ENCODE measurements at regions of chr5 and their contacts with region 1.

Region 1: GRCh38 chr5:5437227-5438172 is 15.0 kb downstream of the ICE1 start:
- DNase-seq: no peak
- H3K4me3 ChIP-seq: no peak overlapping the region
- H3K27ac ChIP-seq: no peak overlapping the region
- H3K4me1 ChIP-seq: no peaks in the 10 kb centered on the region
- H3K27me3 ChIP-seq: no peaks in the 10 kb centered on the region
- CTCF ChIP-seq: no peak

Region 2: GRCh38 chr5:4855048-4855447 is 582.5 kb before region 1 on chr5:
- CTCF ChIA-PET with region 1: no interaction called
- POLR2A ChIA-PET with region 1: interaction called, 20 read pairs
- intact Hi-C with region 1: no loop called
- DNase-seq: no peak
- H3K4me3 ChIP-seq: no peak overlapping the region
- H3K27ac ChIP-seq: no peak overlapping the region
- H3K4me1 ChIP-seq: no peaks in the 10 kb centered on the region
- H3K27me3 ChIP-seq: peaks cover 12% of the 10 kb centered on the region; the same call in 1 of the 2 replicates
- CTCF ChIP-seq: no peak

Region 3: GRCh38 chr5:5306696-5307095 is 130.8 kb before region 1 on chr5:
- CTCF ChIA-PET with region 1: no interaction called
- POLR2A ChIA-PET with region 1: no interaction called
- intact Hi-C with region 1: no loop called
- DNase-seq: peak; percentile 23 to 54
- H3K4me3 ChIP-seq: no peak overlapping the region
- H3K27ac ChIP-seq: no peak overlapping the region
- H3K4me1 ChIP-seq: no peaks in the 10 kb centered on the region
- H3K27me3 ChIP-seq: no peaks in the 10 kb centered on the region
- CTCF ChIP-seq: no peak

Region 4: DNA sequence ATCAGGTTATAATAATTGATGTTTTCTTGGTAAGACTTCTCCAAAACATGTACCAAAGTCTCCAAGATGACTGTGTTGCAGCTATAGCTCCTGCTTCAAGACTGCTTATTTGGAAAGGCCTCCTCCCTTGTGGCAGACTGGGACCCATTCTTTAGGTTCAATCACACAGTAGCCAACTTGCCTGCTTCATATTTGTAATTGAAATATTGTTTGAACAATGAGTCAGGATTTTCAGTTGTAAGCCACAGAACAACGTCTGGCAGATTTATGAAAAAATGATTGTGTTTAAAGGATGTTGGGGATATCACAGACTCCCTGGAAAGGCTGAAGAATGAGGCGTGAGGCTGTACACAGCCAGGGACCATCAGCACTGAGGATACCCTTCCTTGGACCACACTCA is 481.9 kb after region 1 on chr5:
- CTCF ChIA-PET with region 1: no interaction called
- POLR2A ChIA-PET with region 1: no interaction called
- intact Hi-C with region 1: no loop called
- DNase-seq: peak in 1 of 2 experiments; percentile 59
- H3K4me3 ChIP-seq: no peak overlapping the region
- H3K27ac ChIP-seq: no peak overlapping the region
- H3K4me1 ChIP-seq: no peaks in the 10 kb centered on the region
- H3K27me3 ChIP-seq: peaks cover 19% of the 10 kb centered on the region; the same call in 1 of the 2 replicates
- CTCF ChIP-seq: no peak

Measured in PC-9 (cell line).